ENCODE measurements at regions of chr14 and their contacts with region 1.

Region 1: GRCh38 chr14:70655110-70655826 is 13.6 kb downstream of the TTC9 start:
- DNase-seq: peak; percentile 82 to 92 (median 86)
- H3K4me3 ChIP-seq: peak overlapping the region in 1 of 2 donors; percentile 41
- H3K4me3 Mint-ChIP-seq: peak overlapping the region; percentile 76 to 95 (median 85)
- H3K27ac ChIP-seq: peak overlapping the region; percentile 77
- H3K27ac Mint-ChIP-seq: peak overlapping the region; percentile 93 to 99 (median 99)
- H3K4me1 ChIP-seq: peaks cover 90% of the 10 kb centered on the region
- H3K4me1 Mint-ChIP-seq: peaks cover 70 to 96% (median 87%) of the 10 kb centered on the region in 4 donors
- H3K27me3 ChIP-seq: no peaks in the 10 kb centered on the region
- H3K27me3 Mint-ChIP-seq: no peaks in the 10 kb centered on the region

Region 2: DNA sequence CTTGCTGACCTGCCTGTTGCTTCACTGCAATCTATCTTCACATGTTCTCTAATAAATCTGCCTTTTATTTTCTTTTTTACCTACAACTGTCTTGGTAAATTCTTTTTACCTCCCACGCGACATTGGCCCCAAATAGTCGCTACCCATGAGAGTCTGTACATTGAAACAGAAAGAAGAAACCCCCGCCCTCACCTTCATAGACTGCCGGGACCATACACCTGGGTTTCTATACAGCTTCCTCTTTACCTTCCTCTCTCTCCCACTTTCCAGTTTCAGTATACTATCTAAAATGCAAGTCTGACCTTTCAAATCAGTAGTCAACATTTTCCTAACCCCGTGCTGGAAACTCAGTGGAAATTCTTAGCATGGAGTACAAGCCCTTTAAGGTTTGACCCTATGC is 471.3 kb before region 1 on chr14:
- CTCF ChIA-PET with region 1: no interaction called
- POLR2A ChIA-PET with region 1: no interaction called
- intact Hi-C with region 1: no loop called
- DNase-seq: no peak
- H3K4me3 ChIP-seq: no peak overlapping the region
- H3K4me3 Mint-ChIP-seq: no peak overlapping the region
- H3K27ac ChIP-seq: no peak overlapping the region
- H3K27ac Mint-ChIP-seq: no peak overlapping the region
- H3K4me1 ChIP-seq: peaks cover 20% of the 10 kb centered on the region
- H3K4me1 Mint-ChIP-seq: peaks cover 4 to 22% (median 11%) of the 10 kb centered on the region in 4 donors
- H3K27me3 ChIP-seq: peaks cover 4% of the 10 kb centered on the region
- H3K27me3 Mint-ChIP-seq: peaks cover 21 to 33% of the 10 kb centered on the region in 2 donors

Region 3: GRCh38 chr14:70640938-70641547 is 14.2 kb before region 1 on chr14:
- CTCF ChIA-PET with region 1: interaction called, 155 read pairs
- POLR2A ChIA-PET with region 1: interaction called, 363 read pairs
- intact Hi-C with region 1: loop called (anchors 1 kb)
- DNase-seq: peak; percentile 52 to 78 (median 59)
- H3K4me3 ChIP-seq: peak overlapping the region; percentile 78 to 85
- H3K4me3 Mint-ChIP-seq: peak overlapping the region; percentile 95 to 100 (median 97)
- H3K27ac ChIP-seq: peak overlapping the region; percentile 56
- H3K27ac Mint-ChIP-seq: peak overlapping the region; percentile 88 to 98 (median 95)
- H3K4me1 ChIP-seq: peaks cover 48% of the 10 kb centered on the region
- H3K4me1 Mint-ChIP-seq: peaks cover 35 to 64% (median 47%) of the 10 kb centered on the region in 4 donors
- H3K27me3 ChIP-seq: no peaks in the 10 kb centered on the region
- H3K27me3 Mint-ChIP-seq: peaks cover 0 to 1% of the 10 kb centered on the region in 2 donors